Right cardiac atrium (tissue), 5 donors: ENCODE measurements at regions of chr11 and their contacts with region 1.

Region 1: DNA sequence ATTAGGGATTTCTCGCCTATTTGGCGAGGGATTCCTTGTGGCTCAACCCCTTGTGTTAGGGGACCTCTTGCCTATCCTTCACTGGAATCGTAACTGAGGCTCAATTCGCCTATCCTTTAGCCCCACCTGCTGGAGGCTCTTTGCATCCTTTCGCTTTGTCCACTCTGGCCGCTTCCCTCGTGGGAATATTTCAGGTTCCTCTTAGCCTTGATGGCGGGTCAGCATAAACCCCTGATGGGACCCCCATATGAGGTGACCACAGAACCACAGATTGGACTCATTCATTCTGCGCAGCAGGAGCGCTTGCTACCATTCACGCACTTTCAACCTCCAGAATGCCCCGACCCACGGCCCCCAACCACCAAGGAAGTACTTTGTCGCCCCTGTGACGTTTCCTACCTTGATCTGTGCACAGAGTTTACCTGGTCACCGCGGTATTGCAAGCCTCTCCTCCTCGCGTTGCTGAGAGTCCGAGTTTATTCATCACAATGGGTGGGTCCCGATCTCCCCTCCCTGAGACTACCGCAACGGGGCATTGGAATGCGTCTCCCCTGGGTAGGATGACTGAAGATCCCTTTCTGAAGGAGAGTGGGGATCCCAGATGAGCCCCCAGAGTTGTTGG is at the start of gene OR52N2:
- DNase-seq: peak; percentile 65 to 82 (median 73)
- ATAC-seq: peak; percentile 92 to 94
- H3K4me3 ChIP-seq: peak within 1 kb of the TSS; percentile 57
- H3K27ac ChIP-seq: no peak within 1 kb of the TSS
- H3K4me1 ChIP-seq: no peaks in the 10 kb centered on the region
- H3K27me3 ChIP-seq: no peaks in the 10 kb centered on the region
- total RNA-seq, gene OR52N2: not detected

Region 2: DNA sequence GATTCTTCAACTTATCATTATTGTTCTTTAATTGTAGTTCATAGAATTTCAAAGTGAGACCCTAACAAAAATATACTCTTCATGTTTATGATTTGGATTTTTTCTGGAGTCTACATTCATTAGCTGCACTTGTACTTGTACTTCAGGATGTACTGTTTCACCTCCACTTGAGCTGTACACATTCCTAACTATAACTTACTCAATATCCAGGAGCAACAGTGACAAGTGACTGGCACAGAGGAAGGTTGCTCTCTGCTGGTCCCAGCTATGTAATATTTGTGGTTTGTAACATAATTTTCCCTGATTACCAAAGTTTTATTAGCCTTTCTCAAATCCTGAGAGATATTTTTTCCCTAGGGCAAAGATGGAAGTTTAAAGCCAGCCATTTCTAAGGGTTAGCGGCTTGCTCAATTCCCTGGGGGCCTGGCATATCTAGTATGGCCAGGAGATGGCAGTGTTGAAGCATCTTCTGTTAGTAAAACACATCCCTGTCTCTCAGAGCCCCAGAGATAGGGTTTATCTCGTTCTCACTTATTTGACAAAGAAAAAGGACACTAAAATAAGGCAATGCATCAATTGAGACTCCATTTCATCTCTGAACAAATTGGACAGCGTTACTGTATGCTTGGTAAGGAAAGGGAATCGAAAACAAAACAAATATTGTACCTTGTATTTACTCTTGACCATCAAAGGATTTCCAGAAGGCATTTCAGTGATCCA is 684.6 kb before region 1 on chr11:
- intact Hi-C with region 1: loop called in 2 of 4 experiments (anchors 5 to 10 kb)
- DNase-seq: peak; percentile 44 to 60 (median 59)
- ATAC-seq: peak; percentile 63 to 72
- H3K4me3 ChIP-seq: no peak overlapping the region
- H3K27ac ChIP-seq: no peak overlapping the region
- H3K4me1 ChIP-seq: no peaks in the 10 kb centered on the region
- H3K27me3 ChIP-seq: peaks cover 2% of the 10 kb centered on the region

Region 3: DNA sequence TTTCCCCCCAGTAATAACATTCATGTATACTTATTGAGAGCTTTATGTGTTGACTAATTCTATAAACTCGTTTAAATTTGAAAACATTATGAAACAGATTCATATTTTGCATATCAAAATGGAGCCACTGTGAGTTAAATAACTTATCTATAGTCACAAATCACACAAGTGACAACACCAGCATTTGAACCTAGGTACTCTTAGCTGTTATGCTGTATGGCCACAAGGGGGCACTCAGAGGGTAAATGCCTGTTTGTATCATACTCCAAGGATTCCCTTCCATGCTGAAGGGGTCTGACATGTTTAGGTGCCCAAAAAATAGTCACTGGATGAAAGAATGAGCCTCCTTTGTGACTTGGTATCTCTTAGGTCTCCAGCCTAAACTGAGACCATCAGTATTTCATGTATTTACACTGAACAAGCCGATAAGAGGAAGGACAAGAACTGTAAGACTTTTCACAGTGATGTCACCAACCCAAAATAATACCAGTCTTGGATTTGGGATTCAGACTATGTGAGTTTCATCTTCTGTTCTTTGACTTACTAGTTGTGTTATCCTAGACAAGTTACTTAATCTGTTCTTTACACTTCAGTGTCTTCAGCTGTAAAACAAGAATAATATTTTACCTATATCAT is 332.3 kb before region 1 on chr11:
- intact Hi-C with region 1: loop called in 2 of 4 experiments (anchors 2 to 5 kb)
- DNase-seq: peak in 1 of 3 donors; percentile 21
- ATAC-seq: peak; percentile 57 to 60
- H3K4me3 ChIP-seq: no peak overlapping the region
- H3K27ac ChIP-seq: no peak overlapping the region
- H3K4me1 ChIP-seq: no peaks in the 10 kb centered on the region
- H3K27me3 ChIP-seq: no peaks in the 10 kb centered on the region

Region 4: DNA sequence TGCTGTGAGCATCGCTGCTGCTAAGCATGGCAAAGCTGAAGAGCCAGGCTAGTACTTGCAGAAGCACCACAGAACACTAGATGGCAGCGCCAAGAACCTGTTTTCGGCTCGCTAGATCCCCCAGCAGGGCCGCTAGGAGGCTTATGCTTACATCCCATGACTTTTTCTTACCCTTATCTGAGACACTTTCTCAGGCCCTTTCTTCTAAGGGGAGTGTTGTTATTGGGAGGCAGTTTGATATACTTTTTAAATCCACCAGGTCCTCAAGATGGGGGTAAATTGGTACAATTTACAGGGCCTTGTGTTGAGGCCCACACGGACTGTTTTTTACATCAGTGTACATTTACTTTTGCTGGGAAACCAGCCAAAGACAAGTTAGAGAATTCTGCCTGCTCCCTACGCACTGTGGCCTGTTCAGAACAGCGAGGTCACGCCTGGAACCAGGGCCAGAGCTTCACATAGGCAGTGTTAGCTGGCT is 208.2 kb before region 1 on chr11:
- intact Hi-C with region 1: loop called in 1 of 4 experiments (anchors 10 kb)
- DNase-seq: peak; percentile 72 to 89 (median 83)
- ATAC-seq: peak; percentile 89 to 92
- H3K4me3 ChIP-seq: no peak overlapping the region
- H3K27ac ChIP-seq: no peak overlapping the region
- H3K4me1 ChIP-seq: no peaks in the 10 kb centered on the region
- H3K27me3 ChIP-seq: no peaks in the 10 kb centered on the region

Region 5: DNA sequence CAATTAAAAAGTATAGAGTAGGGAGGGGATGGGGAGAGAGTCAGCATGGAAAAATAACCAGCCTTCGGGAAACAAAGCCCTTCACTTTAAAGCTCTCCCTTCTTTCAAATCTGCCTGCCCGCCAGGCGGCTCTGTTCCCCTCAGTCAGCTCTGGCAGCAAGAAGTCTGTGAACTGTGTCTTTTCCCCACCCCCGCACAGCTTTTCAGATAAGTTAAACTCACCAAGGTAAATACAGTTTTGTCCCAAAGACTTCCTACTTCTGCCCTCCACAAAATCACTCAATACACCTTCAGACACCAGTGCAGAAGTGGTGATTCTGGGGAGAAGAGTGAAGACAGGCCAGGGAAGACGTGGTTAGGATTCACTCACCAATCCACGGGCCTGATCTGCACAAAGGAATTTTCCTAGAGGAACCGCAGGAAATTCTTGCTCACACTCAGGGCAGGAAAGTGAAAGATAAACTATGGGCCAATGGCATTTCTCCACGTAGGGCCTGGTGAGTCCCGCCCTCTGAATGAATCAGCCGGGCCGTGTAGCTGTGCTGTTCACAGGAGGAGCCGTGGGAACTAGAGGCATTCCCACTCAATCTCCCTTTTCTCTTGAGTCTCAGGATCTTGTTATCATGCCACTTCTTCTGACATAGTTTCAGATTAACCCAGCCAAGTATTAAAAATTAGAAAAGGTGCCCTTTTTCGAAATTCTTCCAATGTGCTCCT is 123.8 kb before region 1 on chr11 and contains the start of gene TRIM5:
- intact Hi-C with region 1: no loop called
- DNase-seq: peak; percentile 87 to 93 (median 90)
- ATAC-seq: peak; percentile 99
- H3K4me3 ChIP-seq: peak within 1 kb of the TSS; percentile 92
- H3K27ac ChIP-seq: peak within 1 kb of the TSS; percentile 99
- H3K4me1 ChIP-seq: no peaks in the 10 kb centered on the region
- H3K27me3 ChIP-seq: no peaks in the 10 kb centered on the region
- total RNA-seq, gene TRIM5: 7.9 to 11.7 (median 9.6) TPM